HepG2 (cell line): ENCODE measurements at regions of chr20 and their contacts with region 1.

Region 1: GRCh38 chr20:17859616-17860232 is 108.9 kb downstream of the SNX5 start:
- DNase-seq: no peak
- ATAC-seq: no peak; the same call in 1 of the 3 replicates
- H3K4me3 ChIP-seq: peak overlapping the region in 1 of 3 experiments; percentile 17; a peak in 2 of 6 replicates
- H3K27ac ChIP-seq: peak overlapping the region; percentile 86
- H3K4me1 ChIP-seq: peaks cover 100% of the 10 kb centered on the region
- H3K27me3 ChIP-seq: no peaks in the 10 kb centered on the region
- CTCF ChIP-seq: peak; percentile 53
- EP300 ChIP-seq: no peak
- POLR2A ChIP-seq: no peak
- RAD21 ChIP-seq: peak; percentile 34; the same call in 1 of the 2 replicates

Region 2: GRCh38 chr20:17721802-17722486 is 137.8 kb before region 1 on chr20:
- CTCF ChIA-PET with region 1: no interaction called
- POLR2A ChIA-PET with region 1: interaction called, 18 read pairs
- in situ Hi-C with region 1: no loop called
- intact Hi-C with region 1: loop called (anchors 1 kb)
- DNase-seq: peak; percentile 99
- ATAC-seq: peak; percentile 91
- H3K4me3 ChIP-seq: peak overlapping the region in 1 of 3 experiments; percentile 8; a peak in 2 of 6 replicates
- H3K27ac ChIP-seq: peak overlapping the region; percentile 55
- H3K4me1 ChIP-seq: peaks cover 44% of the 10 kb centered on the region
- H3K27me3 ChIP-seq: peaks cover 4 to 65% of the 10 kb centered on the region in 2 experiments; a peak in 4 of 5 replicates
- CTCF ChIP-seq: peak; percentile 35; the same call in 1 of the 2 replicates
- EP300 ChIP-seq: peak; percentile 99; a peak in 3 of 4 replicates
- POLR2A ChIP-seq: no peak
- RAD21 ChIP-seq: peak; percentile 59; the same call in 1 of the 2 replicates

Region 3: DNA sequence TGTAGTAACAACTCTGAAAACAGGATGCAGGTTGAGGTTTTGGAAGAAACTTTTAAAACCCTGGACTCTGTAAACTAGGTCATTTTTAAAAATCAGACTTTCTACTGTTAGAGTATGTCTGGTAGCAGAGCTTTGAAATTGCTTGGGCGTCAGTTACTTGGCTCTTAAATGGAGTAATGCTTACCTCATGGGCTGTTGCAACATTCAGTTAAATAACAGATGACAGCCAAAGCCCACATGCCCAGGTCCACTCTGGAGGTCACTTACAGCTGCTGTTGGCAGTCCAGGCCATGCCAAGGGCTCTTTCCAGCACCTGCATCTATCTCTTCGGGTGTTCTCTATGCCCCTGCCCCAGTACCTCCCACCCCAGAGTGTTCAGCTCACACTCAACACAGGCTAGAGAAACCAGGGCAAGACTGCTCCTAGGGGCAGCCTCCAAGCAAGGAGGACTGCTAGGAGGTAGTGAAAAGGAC is 63.6 kb before region 1 on chr20:
- CTCF ChIA-PET with region 1: no interaction called
- POLR2A ChIA-PET with region 1: interaction called, 11 read pairs
- in situ Hi-C with region 1: no loop called
- intact Hi-C with region 1: no loop called
- DNase-seq: peak; percentile 82
- ATAC-seq: peak; percentile 86
- H3K4me3 ChIP-seq: no peak overlapping the region
- H3K27ac ChIP-seq: no peak overlapping the region
- H3K4me1 ChIP-seq: peaks cover 32% of the 10 kb centered on the region
- H3K27me3 ChIP-seq: peaks cover 3 to 42% of the 10 kb centered on the region in 2 experiments; a peak in 4 of 5 replicates
- CTCF ChIP-seq: no peak
- EP300 ChIP-seq: peak; percentile 76 to 84; a peak in 3 of 4 replicates
- POLR2A ChIP-seq: no peak
- RAD21 ChIP-seq: no peak

Region 4: GRCh38 chr20:17806739-17807441 is 52.8 kb before region 1 on chr20:
- CTCF ChIA-PET with region 1: no interaction called
- POLR2A ChIA-PET with region 1: interaction called, 15 read pairs
- in situ Hi-C with region 1: no loop called
- intact Hi-C with region 1: no loop called
- DNase-seq: no peak
- ATAC-seq: peak; percentile 24
- H3K4me3 ChIP-seq: peak overlapping the region in 2 of 3 experiments; percentile 16 to 49; a peak in 1 of 6 replicates
- H3K27ac ChIP-seq: no peak overlapping the region
- H3K4me1 ChIP-seq: peaks cover 83% of the 10 kb centered on the region
- H3K27me3 ChIP-seq: peaks cover 0 to 1% of the 10 kb centered on the region in 2 experiments; a peak in 2 of 5 replicates
- CTCF ChIP-seq: peak; percentile 54
- EP300 ChIP-seq: no peak
- POLR2A ChIP-seq: no peak
- RAD21 ChIP-seq: no peak

Region 5: DNA sequence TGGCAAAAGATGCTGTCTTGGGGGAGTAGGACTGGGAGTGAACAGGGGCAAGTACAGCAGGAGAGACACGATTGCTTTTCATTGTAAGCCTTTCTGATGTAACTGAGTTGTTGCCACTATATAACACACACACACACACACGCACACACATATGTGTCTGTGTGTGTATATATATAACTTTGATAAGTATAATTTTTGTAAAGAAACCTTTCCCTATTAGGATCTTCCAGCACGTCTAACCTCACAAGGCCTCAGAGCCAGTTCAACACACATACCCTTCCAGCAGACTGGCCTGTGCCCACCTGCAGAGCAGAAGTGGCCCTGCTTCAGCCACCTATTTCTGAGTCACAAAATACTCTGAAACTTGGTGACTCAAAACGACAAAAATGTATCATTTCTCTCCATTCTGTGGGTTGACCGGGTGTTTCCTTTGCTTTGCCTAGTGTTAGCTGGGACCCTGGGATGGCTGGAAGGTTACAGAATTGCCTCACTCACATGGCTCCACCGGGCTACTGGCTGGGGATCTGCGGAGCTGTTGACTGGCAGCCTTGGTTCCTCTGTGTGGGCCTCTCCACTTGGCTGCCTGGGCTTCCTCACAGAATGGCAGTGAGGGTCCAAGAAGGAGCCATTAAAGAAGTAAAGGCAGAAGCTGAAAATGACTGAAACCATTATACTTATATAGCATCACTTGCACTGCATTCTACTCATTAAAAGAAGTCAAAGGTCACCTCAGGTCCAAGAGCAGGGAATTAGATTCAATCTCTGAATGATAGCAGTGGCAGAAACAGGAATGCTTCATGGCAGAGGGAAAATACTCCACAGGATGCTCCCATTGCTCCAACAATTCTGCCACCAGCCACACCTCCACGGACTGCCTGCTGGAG is 33.5 kb before region 1 on chr20:
- CTCF ChIA-PET with region 1: no interaction called
- POLR2A ChIA-PET with region 1: interaction called, 60 read pairs
- in situ Hi-C with region 1: no loop called
- intact Hi-C with region 1: loop called (anchors 2 kb)
- DNase-seq: peak; percentile 44
- ATAC-seq: peak; percentile 10; the same call in 1 of the 3 replicates
- H3K4me3 ChIP-seq: no peak overlapping the region
- H3K27ac ChIP-seq: no peak overlapping the region
- H3K4me1 ChIP-seq: peaks cover 88% of the 10 kb centered on the region
- H3K27me3 ChIP-seq: no peaks in the 10 kb centered on the region; a peak in 1 of 5 replicates
- CTCF ChIP-seq: no peak
- EP300 ChIP-seq: no peak
- POLR2A ChIP-seq: no peak
- RAD21 ChIP-seq: no peak

Region 6: DNA sequence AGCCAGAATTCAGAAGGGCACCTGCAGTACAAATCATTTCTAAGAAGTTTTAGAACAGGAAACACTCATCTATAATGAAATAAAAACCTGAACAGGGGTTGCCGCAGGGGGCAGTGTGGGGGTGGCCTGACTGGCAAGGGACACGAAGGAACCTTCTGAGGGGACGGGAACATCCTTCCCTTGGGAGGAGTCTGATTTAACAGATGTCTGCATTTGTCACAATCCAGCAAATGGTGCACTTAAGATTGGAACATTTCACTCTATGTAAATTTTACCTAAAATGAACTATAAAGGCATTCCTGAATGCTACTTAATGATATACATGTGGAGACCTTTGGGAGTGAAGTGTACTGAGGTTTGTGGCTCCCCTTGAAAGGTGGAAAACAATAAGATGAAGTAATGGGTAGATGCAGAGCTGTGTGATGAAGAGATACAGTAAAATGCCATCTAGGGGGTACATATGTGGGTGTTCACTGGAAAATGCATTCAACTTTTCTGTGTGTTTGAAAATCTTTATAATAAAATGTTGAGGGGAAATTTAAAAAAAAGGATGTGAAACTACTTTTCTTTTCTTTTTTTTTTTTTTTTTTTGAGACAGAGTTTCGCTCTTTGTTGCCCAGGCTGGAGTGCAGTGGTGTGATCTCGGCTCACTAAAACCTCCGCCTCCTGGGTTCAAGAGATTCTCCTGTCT is 19.3 kb after region 1 on chr20:
- CTCF ChIA-PET with region 1: no interaction called
- POLR2A ChIA-PET with region 1: interaction called, 763 read pairs
- in situ Hi-C with region 1: no loop called
- intact Hi-C with region 1: loop called (anchors 1 kb)
- DNase-seq: no peak
- ATAC-seq: no peak
- H3K4me3 ChIP-seq: peak overlapping the region; percentile 30 to 61 (median 44)
- H3K27ac ChIP-seq: peak overlapping the region; percentile 78
- H3K4me1 ChIP-seq: peaks cover 98% of the 10 kb centered on the region
- H3K27me3 ChIP-seq: no peaks in the 10 kb centered on the region
- CTCF ChIP-seq: no peak
- EP300 ChIP-seq: no peak
- POLR2A ChIP-seq: no peak
- RAD21 ChIP-seq: no peak